ENCODE measurements at regions of chr16 and their contacts with region 1.

Region 1: DNA sequence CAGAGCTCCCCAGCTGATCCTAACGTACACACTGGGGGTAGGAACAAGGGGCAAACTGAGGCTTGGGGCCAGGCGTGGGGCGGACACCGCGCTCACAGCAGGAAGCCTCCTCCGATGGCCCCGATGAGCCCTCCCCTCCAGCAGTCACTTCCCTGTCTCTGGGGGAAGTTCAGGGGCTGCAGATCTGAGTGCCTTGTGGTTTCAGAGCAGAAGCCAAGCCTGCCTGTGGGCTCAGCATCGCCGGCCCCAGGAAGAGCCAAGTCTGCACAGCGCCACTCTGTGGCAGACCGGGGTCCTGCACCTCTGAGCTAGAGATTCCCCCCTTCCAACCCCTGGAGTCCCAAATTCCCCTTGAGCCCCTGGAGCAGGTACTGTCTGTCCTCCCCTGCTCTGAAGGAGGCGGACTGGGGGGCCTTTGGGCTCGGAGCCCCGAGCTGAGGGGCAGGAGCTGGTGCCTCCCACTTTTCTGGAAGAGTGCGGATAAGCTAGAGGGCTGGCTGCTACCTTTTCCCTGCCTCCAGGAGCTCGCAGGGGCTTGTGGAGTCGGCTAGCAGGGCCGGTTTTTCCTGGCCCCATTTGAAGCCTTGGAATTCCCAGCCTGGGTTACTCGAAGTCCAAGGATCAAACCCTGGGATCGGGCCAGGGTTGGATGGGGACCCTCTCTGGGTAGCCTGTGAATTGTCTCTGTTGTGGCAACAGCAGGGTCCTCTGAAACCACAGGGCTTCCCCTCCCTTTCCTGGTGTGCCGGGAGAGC is 2.9 kb downstream of the GSE1 start:
- DNase-seq: peak; percentile 59 to 93 (median 86)
- ATAC-seq: peak; percentile 60
- H3K4me3 ChIP-seq: peak overlapping the region; percentile 29 to 47
- H3K4me3 Mint-ChIP-seq: peak overlapping the region; percentile 81
- H3K27ac ChIP-seq: peak overlapping the region; percentile 16 to 33
- H3K27ac Mint-ChIP-seq: peak overlapping the region; percentile 85
- H3K4me1 ChIP-seq: peaks cover 52% of the 10 kb centered on the region
- H3K4me1 Mint-ChIP-seq: peaks cover 49% of the 10 kb centered on the region
- H3K27me3 ChIP-seq: no peaks in the 10 kb centered on the region
- H3K27me3 Mint-ChIP-seq: no peaks in the 10 kb centered on the region
- CTCF ChIP-seq: peak; percentile 96

Region 2: DNA sequence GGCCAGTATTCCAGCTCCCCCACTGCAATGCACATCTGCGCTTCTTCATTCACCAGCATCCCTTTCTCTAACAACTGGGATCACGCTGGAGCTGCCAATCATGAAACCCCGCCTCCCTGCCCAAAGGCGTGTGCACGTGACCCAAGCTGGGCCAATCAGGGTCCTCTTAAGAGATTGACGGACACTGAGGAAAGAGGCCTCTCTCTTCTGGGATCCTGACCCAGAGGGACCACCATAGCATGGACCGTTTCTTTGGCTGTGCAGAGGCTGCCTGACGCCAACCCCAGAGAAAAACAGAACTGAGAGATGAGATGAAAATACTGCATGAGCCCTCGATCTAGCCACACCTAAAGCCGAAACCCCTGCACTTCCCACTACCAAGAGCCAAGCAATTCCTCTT is 1030.1 kb before region 1 on chr16:
- CTCF ChIA-PET with region 1: no interaction called
- POLR2A ChIA-PET with region 1: no interaction called
- intact Hi-C with region 1: no loop called
- DNase-seq: no peak
- ATAC-seq: no peak
- H3K4me3 ChIP-seq: no peak overlapping the region
- H3K4me3 Mint-ChIP-seq: no peak overlapping the region
- H3K27ac ChIP-seq: no peak overlapping the region
- H3K27ac Mint-ChIP-seq: peak overlapping the region; percentile 80
- H3K4me1 ChIP-seq: peaks cover 12% of the 10 kb centered on the region
- H3K4me1 Mint-ChIP-seq: peaks cover 40% of the 10 kb centered on the region
- H3K27me3 ChIP-seq: no peaks in the 10 kb centered on the region
- H3K27me3 Mint-ChIP-seq: no peaks in the 10 kb centered on the region
- CTCF ChIP-seq: no peak

Region 3: GRCh38 chr16:85238233-85238647 is 377.8 kb before region 1 on chr16:
- CTCF ChIA-PET with region 1: no interaction called
- POLR2A ChIA-PET with region 1: no interaction called
- intact Hi-C with region 1: no loop called
- DNase-seq: no peak
- ATAC-seq: no peak
- H3K4me3 ChIP-seq: no peak overlapping the region
- H3K4me3 Mint-ChIP-seq: no peak overlapping the region
- H3K27ac ChIP-seq: no peak overlapping the region
- H3K27ac Mint-ChIP-seq: no peak overlapping the region
- H3K4me1 ChIP-seq: peaks cover 11% of the 10 kb centered on the region
- H3K4me1 Mint-ChIP-seq: peaks cover 4% of the 10 kb centered on the region
- H3K27me3 ChIP-seq: peaks cover 9 to 12% of the 10 kb centered on the region in 2 experiments
- H3K27me3 Mint-ChIP-seq: peaks cover 20% of the 10 kb centered on the region
- CTCF ChIP-seq: no peak

Region 4: GRCh38 chr16:85369741-85370528 is 246.1 kb before region 1 on chr16:
- CTCF ChIA-PET with region 1: interaction called, 15 read pairs
- POLR2A ChIA-PET with region 1: no interaction called
- intact Hi-C with region 1: loop called in 1 of 2 experiments (anchors 1 kb)
- DNase-seq: peak; percentile 16 to 67 (median 48)
- ATAC-seq: peak; percentile 78
- H3K4me3 ChIP-seq: no peak overlapping the region
- H3K4me3 Mint-ChIP-seq: no peak overlapping the region
- H3K27ac ChIP-seq: no peak overlapping the region
- H3K27ac Mint-ChIP-seq: no peak overlapping the region
- H3K4me1 ChIP-seq: no peaks in the 10 kb centered on the region
- H3K4me1 Mint-ChIP-seq: no peaks in the 10 kb centered on the region
- H3K27me3 ChIP-seq: no peaks in the 10 kb centered on the region
- H3K27me3 Mint-ChIP-seq: no peaks in the 10 kb centered on the region
- CTCF ChIP-seq: peak; percentile 72

Region 5: GRCh38 chr16:85420501-85421337 is 195.3 kb before region 1 on chr16:
- CTCF ChIA-PET with region 1: interaction called, 100 read pairs
- POLR2A ChIA-PET with region 1: interaction called, 10 read pairs
- intact Hi-C with region 1: loop called (anchors 1 kb)
- DNase-seq: peak; percentile 60 to 87 (median 72)
- ATAC-seq: peak; percentile 91
- H3K4me3 ChIP-seq: no peak overlapping the region
- H3K4me3 Mint-ChIP-seq: no peak overlapping the region
- H3K27ac ChIP-seq: no peak overlapping the region
- H3K27ac Mint-ChIP-seq: no peak overlapping the region
- H3K4me1 ChIP-seq: peaks cover 7% of the 10 kb centered on the region
- H3K4me1 Mint-ChIP-seq: peaks cover 2% of the 10 kb centered on the region
- H3K27me3 ChIP-seq: no peaks in the 10 kb centered on the region
- H3K27me3 Mint-ChIP-seq: peaks cover 2% of the 10 kb centered on the region
- CTCF ChIP-seq: peak; percentile 100

Region 6: GRCh38 chr16:85441189-85441889 is 174.7 kb before region 1 on chr16:
- CTCF ChIA-PET with region 1: interaction called, 56 read pairs
- POLR2A ChIA-PET with region 1: interaction called, 38 read pairs
- intact Hi-C with region 1: no loop called
- DNase-seq: peak in 4 of 9 experiments; percentile 25 to 57 (median 38)
- ATAC-seq: no peak
- H3K4me3 ChIP-seq: no peak overlapping the region
- H3K4me3 Mint-ChIP-seq: no peak overlapping the region
- H3K27ac ChIP-seq: no peak overlapping the region
- H3K27ac Mint-ChIP-seq: no peak overlapping the region
- H3K4me1 ChIP-seq: peaks cover 14% of the 10 kb centered on the region
- H3K4me1 Mint-ChIP-seq: peaks cover 12% of the 10 kb centered on the region
- H3K27me3 ChIP-seq: no peaks in the 10 kb centered on the region
- H3K27me3 Mint-ChIP-seq: no peaks in the 10 kb centered on the region
- CTCF ChIP-seq: no peak

Region 7: GRCh38 chr16:85491058-85491771 is 124.8 kb before region 1 on chr16:
- CTCF ChIA-PET with region 1: interaction called, 21 read pairs
- POLR2A ChIA-PET with region 1: no interaction called
- intact Hi-C with region 1: loop called in 1 of 2 experiments (anchors 2 kb)
- DNase-seq: peak; percentile 3 to 67 (median 46)
- ATAC-seq: peak; percentile 54
- H3K4me3 ChIP-seq: no peak overlapping the region
- H3K4me3 Mint-ChIP-seq: no peak overlapping the region
- H3K27ac ChIP-seq: no peak overlapping the region
- H3K27ac Mint-ChIP-seq: no peak overlapping the region
- H3K4me1 ChIP-seq: peaks cover 19% of the 10 kb centered on the region
- H3K4me1 Mint-ChIP-seq: peaks cover 18% of the 10 kb centered on the region
- H3K27me3 ChIP-seq: no peaks in the 10 kb centered on the region
- H3K27me3 Mint-ChIP-seq: no peaks in the 10 kb centered on the region
- CTCF ChIP-seq: peak; percentile 50

Region 8: GRCh38 chr16:85626191-85626981 is 10.4 kb after region 1 on chr16:
- CTCF ChIA-PET with region 1: interaction called, 18 read pairs
- POLR2A ChIA-PET with region 1: no interaction called
- intact Hi-C with region 1: no loop called
- DNase-seq: no peak
- ATAC-seq: no peak
- H3K4me3 ChIP-seq: no peak overlapping the region
- H3K4me3 Mint-ChIP-seq: no peak overlapping the region
- H3K27ac ChIP-seq: no peak overlapping the region
- H3K27ac Mint-ChIP-seq: peak overlapping the region; percentile 73
- H3K4me1 ChIP-seq: peaks cover 58% of the 10 kb centered on the region
- H3K4me1 Mint-ChIP-seq: peaks cover 61% of the 10 kb centered on the region
- H3K27me3 ChIP-seq: no peaks in the 10 kb centered on the region
- H3K27me3 Mint-ChIP-seq: no peaks in the 10 kb centered on the region
- CTCF ChIP-seq: no peak

Region 9: DNA sequence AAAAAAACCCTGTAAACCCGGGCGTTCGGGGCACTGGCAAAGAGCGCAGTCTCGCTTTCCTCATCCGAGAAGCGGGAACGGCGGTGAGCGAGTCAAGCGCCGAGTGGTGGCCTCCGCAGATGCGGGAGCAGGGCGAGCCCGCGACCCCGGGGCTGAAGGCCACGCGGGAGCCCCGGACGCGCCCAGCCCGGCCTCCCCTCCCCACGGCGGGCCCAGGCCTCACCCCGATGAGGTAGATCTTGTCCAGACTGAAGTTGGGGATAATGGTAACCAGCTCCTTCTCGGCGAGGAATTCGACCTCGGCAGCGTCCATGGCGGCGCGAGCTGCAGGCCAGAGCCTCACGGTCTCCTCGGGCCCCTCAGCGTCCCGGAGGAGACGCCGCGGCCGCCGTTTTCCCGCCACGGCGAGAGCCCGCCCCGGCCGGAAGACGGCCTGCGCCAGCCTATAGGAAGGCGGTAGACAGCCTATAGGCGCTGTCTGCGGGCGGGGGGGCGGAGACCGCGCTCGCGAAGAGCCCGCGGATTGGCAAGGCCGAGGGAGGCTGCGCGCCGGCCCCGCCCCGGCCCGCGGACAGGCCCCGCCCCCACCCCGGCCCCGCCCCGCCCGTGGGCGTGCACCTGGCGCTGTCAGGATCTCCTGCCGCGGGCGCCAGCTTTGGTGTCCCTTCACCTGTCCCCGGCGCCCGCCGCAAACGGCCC is 72.7 kb after region 1 on chr16 and contains the start of gene GINS2:
- CTCF ChIA-PET with region 1: no interaction called
- POLR2A ChIA-PET with region 1: interaction called, 3 read pairs
- intact Hi-C with region 1: loop called (anchors 2 kb)
- DNase-seq: peak; percentile 84 to 95 (median 89)
- ATAC-seq: peak; percentile 100
- H3K4me3 ChIP-seq: peak within 1 kb of the TSS; percentile 51 to 88
- H3K4me3 Mint-ChIP-seq: peak within 1 kb of the TSS; percentile 75
- H3K27ac ChIP-seq: no peak within 1 kb of the TSS
- H3K27ac Mint-ChIP-seq: no peak within 1 kb of the TSS
- H3K4me1 ChIP-seq: peaks cover 7% of the 10 kb centered on the region
- H3K4me1 Mint-ChIP-seq: peaks cover 2% of the 10 kb centered on the region
- H3K27me3 ChIP-seq: no peaks in the 10 kb centered on the region
- H3K27me3 Mint-ChIP-seq: peaks cover 5% of the 10 kb centered on the region
- CTCF ChIP-seq: no peak
- total RNA-seq, gene GINS2: 0.58 to 1.0 TPM